Activated B cell treated with CpG ODN at 0.5 μM for 24 hours (primary cell): ENCODE measurements at regions of chr12 and their contacts with region 1.

Region 1: DNA sequence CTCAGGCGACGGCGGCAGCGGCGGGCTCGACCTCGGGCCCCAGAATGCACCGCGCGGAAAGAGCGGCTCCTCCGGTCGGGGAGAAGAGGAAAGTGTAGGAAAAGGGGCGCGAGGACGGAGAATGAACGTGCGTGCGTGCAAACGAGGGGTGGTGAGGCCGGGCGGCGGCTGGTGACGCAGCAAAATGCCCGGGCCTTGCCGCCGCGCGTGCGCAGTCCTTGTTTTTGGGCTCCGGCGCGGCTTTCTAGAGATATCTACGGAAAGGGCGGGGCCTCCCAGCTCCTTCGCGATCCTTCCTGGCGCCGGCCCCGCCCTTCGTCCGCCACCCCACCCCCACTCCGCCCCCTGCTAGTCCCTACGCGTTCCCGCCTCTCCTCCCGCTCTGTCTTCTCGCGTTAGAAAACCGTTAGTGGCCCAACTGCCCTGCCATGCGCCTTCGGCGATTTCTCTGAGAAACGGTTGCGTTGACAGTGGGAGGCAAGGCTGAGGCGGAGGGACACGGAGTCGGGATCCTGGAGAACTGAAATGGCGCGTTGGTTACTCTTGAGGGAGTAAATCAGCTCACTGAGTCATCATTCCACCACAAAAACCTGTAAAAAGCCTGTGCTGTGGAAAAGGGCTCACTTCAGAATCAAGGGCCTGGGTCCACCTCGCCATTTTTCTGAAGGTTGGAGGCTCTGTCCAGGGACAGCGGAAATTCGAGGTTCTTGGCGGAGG is at the start of gene PTGES3:
- DNase-seq: peak; percentile 97
- ATAC-seq: peak; percentile 75
- H3K4me3 Mint-ChIP-seq: peak within 1 kb of the TSS; percentile 100
- H3K27ac Mint-ChIP-seq: peak within 1 kb of the TSS; percentile 99
- H3K4me1 Mint-ChIP-seq: peaks cover 36% of the 10 kb centered on the region
- H3K27me3 Mint-ChIP-seq: no peaks in the 10 kb centered on the region
- CTCF ChIP-seq: no peak
- total RNA-seq, gene PTGES3: 183 and 185 TPM in 2 replicates

Region 2: DNA sequence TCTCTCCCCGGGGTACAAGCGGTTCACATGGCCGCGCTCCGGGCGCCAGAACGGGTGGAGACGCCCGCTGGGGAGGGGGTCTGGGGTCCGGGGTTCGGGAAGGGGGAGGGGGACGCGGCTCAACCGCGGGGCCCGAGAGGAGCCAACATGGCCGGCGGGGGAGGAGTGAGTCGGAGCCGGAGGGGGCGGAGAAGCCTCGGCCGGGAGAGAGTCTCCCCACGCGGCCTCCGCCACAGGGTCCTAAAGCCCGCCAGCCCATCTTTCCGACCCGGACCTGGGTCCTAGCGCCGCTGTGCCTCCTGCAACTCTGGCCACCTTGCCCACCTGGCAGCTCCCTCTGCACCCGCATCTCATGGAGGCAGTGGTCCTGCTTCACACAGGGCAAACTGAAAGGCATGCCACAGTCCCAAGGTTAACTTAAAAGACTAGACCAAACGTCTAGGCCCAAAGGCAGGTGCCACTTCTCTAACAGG is 58.1 kb before region 1 on chr12 and contains the start of gene BAZ2A:
- CTCF ChIA-PET with region 1: interaction called, 15 read pairs
- POLR2A ChIA-PET with region 1: interaction called, 93 read pairs
- intact Hi-C with region 1: loop called (anchors 1 kb)
- DNase-seq: peak; percentile 74
- ATAC-seq: peak; percentile 62
- H3K4me3 Mint-ChIP-seq: peak within 1 kb of the TSS; percentile 96
- H3K27ac Mint-ChIP-seq: peak within 1 kb of the TSS; percentile 88
- H3K4me1 Mint-ChIP-seq: peaks cover 80% of the 10 kb centered on the region
- H3K27me3 Mint-ChIP-seq: no peaks in the 10 kb centered on the region
- CTCF ChIP-seq: no peak
- total RNA-seq, gene BAZ2A: 153 and 192 TPM in 2 replicates

Region 3: GRCh38 chr12:56657416-56658379 is 30.6 kb before region 1 on chr12:
- CTCF ChIA-PET with region 1: no interaction called
- POLR2A ChIA-PET with region 1: interaction called, 97 read pairs
- intact Hi-C with region 1: loop called (anchors 1 kb)
- DNase-seq: no peak
- ATAC-seq: peak; percentile 73
- H3K4me3 Mint-ChIP-seq: peak overlapping the region; percentile 64
- H3K27ac Mint-ChIP-seq: peak overlapping the region; percentile 89
- H3K4me1 Mint-ChIP-seq: peaks cover 35% of the 10 kb centered on the region
- H3K27me3 Mint-ChIP-seq: no peaks in the 10 kb centered on the region
- CTCF ChIP-seq: no peak

Region 4: DNA sequence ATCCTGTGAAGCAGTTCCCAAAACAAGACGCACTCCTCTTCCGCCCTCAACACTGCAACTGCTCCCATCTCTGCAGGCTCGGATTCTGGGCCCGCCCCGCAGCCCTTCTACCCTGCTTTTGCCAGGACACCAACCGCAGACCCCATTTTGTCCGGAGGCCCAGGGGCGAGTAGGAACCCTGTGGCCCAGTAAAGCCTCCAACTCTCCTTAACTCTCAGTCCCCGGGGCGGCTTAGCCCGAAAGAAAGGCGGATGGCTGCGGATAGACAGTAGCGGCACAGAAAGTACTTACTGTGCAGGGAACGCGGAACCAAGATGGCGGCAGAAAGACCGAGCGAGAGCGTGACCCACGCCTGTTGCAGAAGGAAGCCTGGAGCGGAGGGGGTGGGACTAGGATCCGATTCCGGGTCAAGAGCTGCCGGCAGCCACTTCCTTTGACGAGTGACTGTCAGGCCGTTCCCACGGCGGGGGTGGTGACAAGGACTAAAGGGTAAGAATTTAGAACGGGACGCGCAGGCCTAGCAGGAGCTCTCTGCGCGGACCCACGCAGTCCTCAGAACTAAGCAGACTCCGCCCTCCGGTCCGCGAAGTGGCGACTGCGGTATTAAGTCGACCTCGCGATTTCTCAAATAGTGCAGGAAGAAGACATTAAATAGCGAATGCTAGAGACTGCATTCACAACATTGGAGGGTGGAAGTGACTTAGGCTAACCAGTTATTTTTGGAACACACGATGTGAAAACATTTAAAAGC is 36.9 kb after region 1 on chr12 and contains the start of gene NACA:
- CTCF ChIA-PET with region 1: interaction called, 4 read pairs
- POLR2A ChIA-PET with region 1: interaction called, 159 read pairs
- intact Hi-C with region 1: loop called (anchors 1 kb)
- DNase-seq: peak; percentile 90
- ATAC-seq: peak; percentile 95
- H3K4me3 Mint-ChIP-seq: peak within 1 kb of the TSS; percentile 99
- H3K27ac Mint-ChIP-seq: peak within 1 kb of the TSS; percentile 98
- H3K4me1 Mint-ChIP-seq: peaks cover 52% of the 10 kb centered on the region
- H3K27me3 Mint-ChIP-seq: no peaks in the 10 kb centered on the region
- CTCF ChIP-seq: no peak
- total RNA-seq, gene NACA: 1,104 and 1,342 TPM in 2 replicates

Region 5: GRCh38 chr12:56803750-56804149 is 115.5 kb after region 1 on chr12:
- CTCF ChIA-PET with region 1: no interaction called
- POLR2A ChIA-PET with region 1: no interaction called
- intact Hi-C with region 1: no loop called
- DNase-seq: no peak
- ATAC-seq: no peak
- H3K4me3 Mint-ChIP-seq: no peak overlapping the region
- H3K27ac Mint-ChIP-seq: no peak overlapping the region
- H3K4me1 Mint-ChIP-seq: no peaks in the 10 kb centered on the region
- H3K27me3 Mint-ChIP-seq: no peaks in the 10 kb centered on the region
- CTCF ChIP-seq: no peak

Region 6: GRCh38 chr12:57088459-57089248 is 400.4 kb after region 1 on chr12 and contains the start of gene NAB2:
- CTCF ChIA-PET with region 1: no interaction called
- POLR2A ChIA-PET with region 1: no interaction called
- intact Hi-C with region 1: loop called (anchors 5 kb)
- DNase-seq: peak; percentile 89
- ATAC-seq: peak; percentile 66
- H3K4me3 Mint-ChIP-seq: peak within 1 kb of the TSS; percentile 91
- H3K27ac Mint-ChIP-seq: peak within 1 kb of the TSS; percentile 96
- H3K4me1 Mint-ChIP-seq: peaks cover 55% of the 10 kb centered on the region
- H3K27me3 Mint-ChIP-seq: no peaks in the 10 kb centered on the region
- CTCF ChIP-seq: no peak
- total RNA-seq, gene NAB2: 20.4 and 22.1 TPM in 2 replicates